Mammary epithelial cell (primary cell): ENCODE measurements at regions of chr18 and their contacts with region 1.

Region 1: DNA sequence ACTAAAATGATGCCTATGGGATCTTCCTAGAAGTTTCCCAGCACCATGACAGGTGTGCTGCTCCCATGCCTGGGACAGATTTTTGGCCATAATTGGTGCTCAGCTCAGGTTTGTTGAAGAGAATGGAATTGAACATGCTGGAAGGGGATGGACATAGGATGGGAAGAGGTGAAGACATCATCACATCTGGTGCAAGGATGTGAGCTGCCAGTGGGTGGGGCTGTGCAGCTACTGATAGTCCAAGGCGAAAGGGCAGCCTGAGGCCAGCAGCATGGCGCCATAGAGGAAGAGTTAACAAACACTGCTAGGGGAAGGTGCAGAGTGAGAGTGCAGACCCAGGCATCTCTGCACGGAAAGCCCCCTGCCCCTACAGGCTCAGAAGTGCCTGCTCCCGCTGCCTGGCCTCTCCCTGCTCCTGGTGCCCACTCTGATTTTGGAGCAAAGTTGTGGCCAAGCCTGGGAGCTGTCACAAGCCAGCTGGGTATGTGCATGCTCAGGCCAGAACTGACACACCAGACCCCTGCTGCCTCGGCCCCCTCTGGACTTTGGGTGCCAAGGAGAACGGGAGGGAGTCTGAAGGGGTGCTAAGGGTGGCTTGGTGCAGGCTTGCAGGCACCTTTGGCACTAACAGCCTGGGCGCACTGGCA is 178.6 kb downstream of the ZBTB7C start:
- DNase-seq: peak; percentile 61
- H3K4me3 ChIP-seq: no peak overlapping the region
- H3K27ac ChIP-seq: no peak overlapping the region
- H3K4me1 ChIP-seq: peaks cover 41% of the 10 kb centered on the region
- H3K27me3 ChIP-seq: no peaks in the 10 kb centered on the region
- CTCF ChIP-seq: peak; percentile 82 to 85

Region 2: DNA sequence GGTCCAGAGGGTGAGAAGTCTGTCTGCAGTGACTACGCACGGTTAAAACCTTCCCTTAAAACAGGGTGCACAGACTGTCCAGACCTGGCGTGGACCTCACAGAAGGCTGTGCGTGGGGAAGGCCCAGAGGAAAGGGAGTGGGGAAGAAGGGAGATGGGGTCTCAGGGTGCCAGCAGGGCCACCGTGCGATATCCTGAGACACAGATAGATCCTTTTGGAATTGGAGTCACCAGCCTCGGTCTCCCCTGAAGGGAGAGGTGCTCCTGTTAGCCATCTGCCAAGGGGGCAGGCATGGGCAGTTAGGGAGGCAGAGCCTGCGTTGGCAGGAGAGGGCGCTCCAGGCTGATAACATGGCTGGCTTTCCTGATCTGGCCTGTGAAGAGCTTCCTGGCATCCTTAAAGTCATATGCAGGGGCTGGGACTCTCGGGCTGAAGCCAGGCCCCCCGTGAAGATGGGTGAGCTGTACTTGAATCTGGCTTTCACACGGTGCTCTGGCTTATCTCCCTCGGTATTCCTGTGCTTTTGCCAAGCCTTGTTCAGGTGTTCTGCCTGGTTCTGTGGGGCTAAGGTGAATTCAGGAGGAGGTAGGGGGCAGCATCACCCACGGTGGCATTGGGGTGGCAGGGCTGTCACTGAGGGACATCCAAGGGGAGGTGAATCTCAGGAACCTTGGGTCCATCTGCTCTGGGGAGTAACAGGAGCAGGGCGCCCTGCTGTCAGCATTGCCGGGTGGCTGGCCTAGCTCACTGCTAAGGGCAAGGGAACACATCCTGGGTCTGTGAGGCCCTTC is 192.9 kb before region 1 on chr18:
- CTCF ChIA-PET with region 1: no interaction called
- dilution Hi-C with region 1: no loop called
- in situ Hi-C with region 1: loop called in 1 of 2 experiments (anchors 10 kb)
- intact Hi-C with region 1: loop called (anchors 1 kb)
- DNase-seq: peak; percentile 24
- H3K4me3 ChIP-seq: no peak overlapping the region
- H3K27ac ChIP-seq: no peak overlapping the region
- H3K4me1 ChIP-seq: peaks cover 29% of the 10 kb centered on the region
- H3K27me3 ChIP-seq: no peaks in the 10 kb centered on the region
- CTCF ChIP-seq: peak; percentile 49 to 66

Region 3: GRCh38 chr18:48215876-48216623 is 14.5 kb before region 1 on chr18:
- CTCF ChIA-PET with region 1: no interaction called
- dilution Hi-C with region 1: no loop called
- in situ Hi-C with region 1: no loop called
- intact Hi-C with region 1: no loop called
- DNase-seq: no peak
- H3K4me3 ChIP-seq: no peak overlapping the region
- H3K27ac ChIP-seq: no peak overlapping the region
- H3K4me1 ChIP-seq: peaks cover 11% of the 10 kb centered on the region
- H3K27me3 ChIP-seq: no peaks in the 10 kb centered on the region
- CTCF ChIP-seq: no peak

Region 4: GRCh38 chr18:48336334-48336733 is 105.7 kb after region 1 on chr18:
- CTCF ChIA-PET with region 1: interaction called, 6 read pairs
- dilution Hi-C with region 1: loop called (anchors 5 kb)
- in situ Hi-C with region 1: loop called in 1 of 2 experiments (anchors 10 kb)
- intact Hi-C with region 1: loop called (anchors 1 kb)
- DNase-seq: no peak
- H3K4me3 ChIP-seq: no peak overlapping the region
- H3K27ac ChIP-seq: no peak overlapping the region
- H3K4me1 ChIP-seq: peaks cover 7% of the 10 kb centered on the region
- H3K27me3 ChIP-seq: no peaks in the 10 kb centered on the region
- CTCF ChIP-seq: peak; percentile 53 to 83

Region 5: DNA sequence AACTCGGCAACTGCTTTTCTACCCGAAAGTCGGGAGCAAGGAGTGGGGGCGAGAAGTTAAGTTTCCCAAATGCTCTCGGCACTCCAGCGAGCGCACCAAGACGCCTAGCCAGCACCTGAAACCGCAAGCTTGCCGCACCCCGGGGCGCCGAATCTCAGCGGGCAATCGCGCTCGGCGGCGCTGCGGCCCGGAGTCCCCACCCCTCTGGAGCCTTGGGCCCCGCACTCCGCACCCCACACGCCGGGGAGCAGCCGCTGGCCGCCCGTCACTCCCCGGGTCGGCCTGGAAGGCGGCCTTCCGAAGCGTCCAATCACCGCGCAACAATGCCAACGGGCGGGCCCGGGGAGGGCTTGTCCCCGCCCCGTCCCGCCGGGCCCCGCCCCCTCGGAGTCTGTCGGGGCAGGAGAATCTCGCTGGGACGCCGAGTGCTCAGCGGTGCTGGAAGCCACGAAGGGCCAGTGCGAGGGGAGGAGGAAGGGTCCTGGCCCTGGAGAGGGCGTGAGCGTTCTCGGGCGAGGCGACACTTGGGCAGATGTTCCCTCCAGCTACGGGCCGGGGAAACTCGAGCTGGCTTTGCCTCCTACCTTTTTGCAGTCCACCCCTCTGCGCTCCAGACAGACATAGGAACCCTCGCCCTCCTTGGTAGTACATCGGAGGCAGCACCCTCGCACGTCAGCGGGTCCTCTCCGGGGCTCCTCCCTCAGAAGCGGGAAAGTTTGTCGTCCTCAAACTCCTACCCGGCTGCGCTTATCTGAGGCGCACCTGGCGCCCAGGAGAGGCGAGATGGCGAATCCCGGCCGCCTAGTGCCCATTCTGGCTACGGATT is 179.7 kb after region 1 on chr18:
- CTCF ChIA-PET with region 1: interaction called, 3 read pairs
- dilution Hi-C with region 1: no loop called
- in situ Hi-C with region 1: no loop called
- intact Hi-C with region 1: loop called (anchors 1 kb)
- DNase-seq: peak; percentile 93
- H3K4me3 ChIP-seq: peak overlapping the region; percentile 75 to 84 (median 82)
- H3K27ac ChIP-seq: peak overlapping the region; percentile 52
- H3K4me1 ChIP-seq: peaks cover 31% of the 10 kb centered on the region
- H3K27me3 ChIP-seq: no peaks in the 10 kb centered on the region
- CTCF ChIP-seq: peak; percentile 20 to 24

Region 6: DNA sequence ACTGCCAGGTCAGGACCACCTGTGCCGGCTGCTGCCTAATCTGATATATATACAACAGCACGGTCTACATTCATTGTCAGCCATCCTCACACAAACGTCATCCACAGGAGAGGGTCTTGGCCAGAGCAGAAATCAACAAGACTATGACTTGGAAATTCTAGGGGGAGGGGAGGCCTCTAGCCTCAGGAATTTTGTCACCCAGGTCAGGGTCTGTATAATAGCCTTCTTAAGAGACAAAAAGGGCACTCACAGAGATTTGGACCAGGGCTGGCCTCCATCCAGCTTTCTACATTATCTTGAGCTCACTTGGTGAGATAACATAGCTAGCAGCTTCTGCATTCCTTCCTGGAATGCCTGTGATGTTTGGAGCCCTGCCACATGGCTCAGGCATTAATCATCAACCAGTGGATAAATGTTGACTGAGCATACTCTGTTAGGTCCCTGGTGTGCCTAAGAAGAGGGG is 257.8 kb after region 1 on chr18:
- CTCF ChIA-PET with region 1: no interaction called
- dilution Hi-C with region 1: no loop called
- in situ Hi-C with region 1: no loop called
- intact Hi-C with region 1: no loop called
- DNase-seq: peak; percentile 73
- H3K4me3 ChIP-seq: no peak overlapping the region
- H3K27ac ChIP-seq: no peak overlapping the region
- H3K4me1 ChIP-seq: peaks cover 16% of the 10 kb centered on the region
- H3K27me3 ChIP-seq: no peaks in the 10 kb centered on the region
- CTCF ChIP-seq: no peak